ENCODE measurements at regions of chr7 and their contacts with region 1.

Region 1: GRCh38 chr7:74206589-74207120 is 3.2 kb upstream of the LAT2 start:
- DNase-seq: peak; percentile 59
- H3K27ac ChIP-seq: no peak overlapping the region
- CTCF ChIP-seq: peak; percentile 99

Region 2: GRCh38 chr7:73879977-73880681 is 326.5 kb before region 1 on chr7:
- CTCF ChIA-PET with region 1: no interaction called
- POLR2A ChIA-PET with region 1: no interaction called
- DNase-seq: no peak
- H3K27ac ChIP-seq: no peak overlapping the region
- CTCF ChIP-seq: no peak

Region 3: GRCh38 chr7:73899731-73900142 is 306.9 kb before region 1 on chr7:
- CTCF ChIA-PET with region 1: no interaction called
- POLR2A ChIA-PET with region 1: no interaction called
- DNase-seq: peak; percentile 54
- H3K27ac ChIP-seq: peak overlapping the region; percentile 90
- CTCF ChIP-seq: no peak

Region 4: DNA sequence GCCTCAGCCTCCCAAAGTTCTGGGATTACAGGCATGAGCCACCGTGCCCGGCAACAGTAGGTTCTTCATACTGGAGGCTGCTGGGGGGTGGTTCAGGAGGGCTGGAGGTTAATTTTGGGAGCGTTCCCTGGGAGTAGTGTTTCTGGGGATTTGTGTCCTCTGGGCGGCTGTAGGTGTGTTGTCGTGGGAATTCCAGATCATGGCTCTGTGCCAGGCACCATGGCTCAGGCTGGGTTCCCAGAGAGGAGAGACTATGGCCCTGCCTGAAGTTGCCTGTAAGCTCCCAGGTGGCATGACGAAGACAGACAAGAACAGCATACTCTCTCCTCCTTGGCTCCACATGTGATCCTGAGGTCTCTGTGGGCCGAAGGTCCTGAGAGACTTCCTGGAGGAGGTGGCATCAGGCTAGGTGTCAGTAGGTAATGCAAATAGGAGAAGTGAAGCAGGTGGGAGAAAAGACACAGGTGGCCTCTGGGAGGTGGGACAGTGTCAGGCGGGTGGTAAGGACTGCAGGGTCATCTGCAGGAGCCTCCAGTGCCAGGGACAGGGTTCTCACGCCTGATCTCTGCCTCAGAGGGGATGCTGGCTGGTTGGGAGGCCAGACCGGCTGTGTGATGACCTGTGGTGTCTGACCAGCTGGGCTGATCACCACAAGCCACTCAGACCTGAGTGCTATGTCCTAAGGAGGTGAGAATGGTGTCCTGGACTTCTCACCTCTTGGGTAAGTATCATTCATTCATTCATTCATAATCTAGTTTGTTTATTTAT is 101.3 kb after region 1 on chr7:
- CTCF ChIA-PET with region 1: no interaction called
- POLR2A ChIA-PET with region 1: no interaction called
- DNase-seq: no peak
- H3K27ac ChIP-seq: peak overlapping the region; percentile 98
- CTCF ChIP-seq: no peak

Region 5: DNA sequence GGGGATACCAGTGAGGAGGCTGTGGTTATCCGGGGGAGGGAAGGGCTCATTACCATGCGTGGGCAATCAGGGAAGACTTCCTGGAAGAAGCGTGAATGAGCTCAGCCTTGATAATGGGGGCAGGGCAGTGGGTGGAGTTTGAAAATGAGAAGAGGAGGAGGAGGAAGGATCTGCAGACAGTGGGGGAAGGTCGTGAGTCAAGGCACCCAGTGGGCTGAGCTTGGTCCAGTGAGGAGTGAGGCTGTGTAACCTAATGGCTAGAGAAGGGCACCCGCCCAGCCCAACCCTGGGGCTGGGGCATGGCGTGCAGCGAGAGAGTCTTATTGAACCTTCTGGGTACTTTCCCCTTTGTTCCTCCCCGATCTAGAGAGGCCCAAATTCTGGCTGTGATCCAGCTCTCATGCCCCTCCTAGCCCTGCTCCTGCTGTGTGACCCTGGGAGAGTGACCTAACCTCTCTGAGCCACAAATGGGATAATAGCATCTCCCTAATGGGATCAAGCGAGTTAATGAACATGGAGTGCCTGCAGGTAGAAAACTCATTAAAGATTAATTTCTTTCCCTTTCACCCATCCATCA is 114.1 kb after region 1 on chr7:
- CTCF ChIA-PET with region 1: no interaction called
- POLR2A ChIA-PET with region 1: no interaction called
- DNase-seq: no peak
- H3K27ac ChIP-seq: peak overlapping the region; percentile 98; the same call in 1 of the 2 replicates
- CTCF ChIP-seq: no peak

Region 6: DNA sequence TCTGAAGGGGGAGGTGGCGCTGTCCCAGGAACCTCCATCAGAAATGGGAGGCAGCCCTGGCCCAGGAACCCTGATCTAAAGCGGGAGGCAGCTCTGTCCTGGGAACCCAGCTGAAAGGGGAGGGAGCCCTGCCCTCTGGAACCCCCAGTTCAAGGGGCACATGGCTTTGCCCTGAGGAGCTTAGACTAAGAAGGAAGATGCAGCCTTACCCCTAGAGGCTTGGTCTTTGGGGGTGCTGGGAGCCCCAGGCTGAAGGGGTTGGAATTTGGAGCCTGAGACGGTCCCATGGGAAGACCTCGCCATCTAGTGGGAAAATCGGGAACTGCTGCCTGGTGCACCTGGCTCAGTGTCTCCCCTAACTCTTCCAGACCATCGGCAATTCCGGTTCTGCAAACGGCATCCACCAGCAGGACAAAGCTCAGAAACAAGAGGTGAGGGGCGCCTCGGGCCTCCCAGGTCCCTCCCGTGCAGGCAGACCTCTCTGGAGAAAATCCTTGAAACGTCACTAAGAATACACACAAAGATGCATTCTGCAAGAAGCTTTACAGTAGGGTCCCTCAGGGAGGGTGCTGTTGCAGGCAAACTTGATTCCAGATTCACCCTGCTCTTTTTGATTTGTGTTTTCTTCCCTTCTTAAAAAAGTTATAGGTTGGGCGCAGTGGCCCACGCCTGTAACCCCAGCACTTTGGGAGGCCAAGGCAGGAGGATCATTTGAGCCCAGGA is 194.6 kb after region 1 on chr7:
- CTCF ChIA-PET with region 1: interaction called, 64 read pairs
- POLR2A ChIA-PET with region 1: no interaction called
- DNase-seq: peak; percentile 60
- H3K27ac ChIP-seq: peak overlapping the region; percentile 40
- CTCF ChIP-seq: peak; percentile 99

Region 7: GRCh38 chr7:74410772-74411171 is 204.1 kb after region 1 on chr7:
- CTCF ChIA-PET with region 1: interaction called, 10 read pairs
- POLR2A ChIA-PET with region 1: interaction called, 3 read pairs
- DNase-seq: no peak
- H3K27ac ChIP-seq: no peak overlapping the region
- CTCF ChIP-seq: no peak

Measured in RWPE1 (cell line).